Tibial artery (tissue), 4 donors: ENCODE measurements at regions of chr2 and their contacts with region 1.

Region 1: DNA sequence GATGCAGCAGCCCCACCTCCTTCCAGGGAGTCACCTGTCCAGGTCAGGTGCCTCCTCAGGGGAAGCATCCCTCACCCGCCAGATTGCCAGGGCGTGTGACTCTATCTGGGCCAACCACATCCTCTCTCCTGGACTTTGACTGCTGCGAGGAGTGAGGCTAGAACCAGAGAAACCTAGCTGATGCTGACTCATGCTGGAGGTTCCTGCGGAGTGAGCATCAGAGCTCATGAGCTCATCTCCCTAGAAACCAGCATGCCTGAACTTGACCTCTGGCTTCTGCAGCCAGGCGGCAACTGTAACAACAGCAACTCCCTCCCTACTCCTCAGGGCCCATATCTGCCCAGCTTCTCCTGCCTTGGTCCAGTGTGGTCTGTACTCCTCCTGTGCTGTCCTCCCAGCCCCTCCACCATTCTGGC is 28.3 kb upstream of the NT5DC4 start:
- DNase-seq: no peak
- H3K4me3 ChIP-seq: no peak overlapping the region
- H3K27ac ChIP-seq: no peak overlapping the region
- H3K4me1 ChIP-seq: no peaks in the 10 kb centered on the region
- H3K27me3 ChIP-seq: no peaks in the 10 kb centered on the region
- CTCF ChIP-seq: no peak

Region 2: DNA sequence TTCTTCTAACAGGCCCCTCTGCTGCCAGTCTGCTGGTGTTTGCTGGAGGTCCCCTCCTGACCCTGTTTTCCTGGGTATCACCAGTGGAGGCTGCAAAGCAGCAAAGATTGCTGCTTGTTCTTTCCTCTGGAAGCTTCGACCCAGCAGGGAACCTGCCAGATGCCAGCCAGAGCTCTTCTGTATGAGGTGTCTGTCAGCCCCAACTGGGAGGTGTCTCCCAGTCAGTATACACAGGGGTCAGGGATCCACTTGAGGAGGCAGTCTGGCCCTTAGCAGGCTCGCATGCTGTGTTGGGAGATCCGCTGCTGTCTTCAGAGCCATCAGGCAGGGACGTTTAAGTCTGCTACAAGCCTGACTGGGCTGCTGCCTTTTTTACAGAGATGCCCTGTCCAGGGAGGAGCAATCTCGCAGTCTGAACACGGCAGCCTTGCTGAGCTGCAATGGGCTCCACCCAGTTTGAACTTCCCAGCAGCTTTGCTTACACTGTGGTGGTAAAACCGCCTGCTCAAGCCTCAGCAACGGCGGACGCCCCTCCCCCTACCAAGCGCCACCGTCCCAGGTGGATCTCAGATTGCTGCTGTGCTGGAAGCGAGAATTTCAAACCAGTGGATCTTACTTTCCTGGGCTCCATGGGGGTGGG is 78.2 kb before region 1 on chr2:
- intact Hi-C with region 1: no loop called
- DNase-seq: peak in 1 of 2 donors; percentile 41
- H3K4me3 ChIP-seq: no peak overlapping the region
- H3K27ac ChIP-seq: no peak overlapping the region
- H3K4me1 ChIP-seq: no peaks in the 10 kb centered on the region
- H3K27me3 ChIP-seq: no peaks in the 10 kb centered on the region
- CTCF ChIP-seq: no peak

Region 3: DNA sequence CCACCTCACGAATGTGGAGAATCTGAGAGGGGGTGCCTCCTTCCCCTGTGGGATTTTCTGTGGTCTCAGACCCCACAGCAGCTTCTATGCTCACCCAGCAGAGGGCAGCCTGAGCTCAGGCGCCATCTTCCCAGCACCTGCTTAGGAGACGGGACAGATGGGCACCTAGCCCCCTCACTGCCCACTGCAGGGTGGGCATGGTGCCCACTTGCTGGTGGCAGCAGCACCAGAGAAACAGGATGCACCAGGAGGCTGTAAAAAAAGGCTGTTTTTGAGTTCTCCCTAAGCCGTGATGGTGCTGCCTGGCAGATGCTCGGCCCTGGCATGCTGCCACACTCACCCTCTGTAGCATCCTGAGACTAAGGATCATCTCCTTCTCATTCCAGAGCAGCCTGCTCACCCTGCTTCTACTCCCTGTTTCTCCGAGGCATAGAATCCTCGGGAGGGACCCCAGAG is 65.9 kb before region 1 on chr2:
- intact Hi-C with region 1: loop called (anchors 10 kb)
- DNase-seq: peak; percentile 41 to 73
- H3K4me3 ChIP-seq: peak overlapping the region in 1 of 2 donors; percentile 29
- H3K27ac ChIP-seq: peak overlapping the region; percentile 66 to 68
- H3K4me1 ChIP-seq: peaks cover 0 to 28% (median 21%) of the 10 kb centered on the region in 4 donors
- H3K27me3 ChIP-seq: no peaks in the 10 kb centered on the region
- CTCF ChIP-seq: peak; percentile 71 to 83

Region 4: GRCh38 chr2:112924821-112925220 is 232.3 kb after region 1 on chr2:
- intact Hi-C with region 1: no loop called
- DNase-seq: no peak
- H3K4me3 ChIP-seq: no peak overlapping the region
- H3K27ac ChIP-seq: no peak overlapping the region
- H3K4me1 ChIP-seq: no peaks in the 10 kb centered on the region
- H3K27me3 ChIP-seq: no peaks in the 10 kb centered on the region
- CTCF ChIP-seq: no peak